SK-N-SH (cell line): ENCODE measurements at regions of chr12 and their contacts with region 1.

Region 1: DNA sequence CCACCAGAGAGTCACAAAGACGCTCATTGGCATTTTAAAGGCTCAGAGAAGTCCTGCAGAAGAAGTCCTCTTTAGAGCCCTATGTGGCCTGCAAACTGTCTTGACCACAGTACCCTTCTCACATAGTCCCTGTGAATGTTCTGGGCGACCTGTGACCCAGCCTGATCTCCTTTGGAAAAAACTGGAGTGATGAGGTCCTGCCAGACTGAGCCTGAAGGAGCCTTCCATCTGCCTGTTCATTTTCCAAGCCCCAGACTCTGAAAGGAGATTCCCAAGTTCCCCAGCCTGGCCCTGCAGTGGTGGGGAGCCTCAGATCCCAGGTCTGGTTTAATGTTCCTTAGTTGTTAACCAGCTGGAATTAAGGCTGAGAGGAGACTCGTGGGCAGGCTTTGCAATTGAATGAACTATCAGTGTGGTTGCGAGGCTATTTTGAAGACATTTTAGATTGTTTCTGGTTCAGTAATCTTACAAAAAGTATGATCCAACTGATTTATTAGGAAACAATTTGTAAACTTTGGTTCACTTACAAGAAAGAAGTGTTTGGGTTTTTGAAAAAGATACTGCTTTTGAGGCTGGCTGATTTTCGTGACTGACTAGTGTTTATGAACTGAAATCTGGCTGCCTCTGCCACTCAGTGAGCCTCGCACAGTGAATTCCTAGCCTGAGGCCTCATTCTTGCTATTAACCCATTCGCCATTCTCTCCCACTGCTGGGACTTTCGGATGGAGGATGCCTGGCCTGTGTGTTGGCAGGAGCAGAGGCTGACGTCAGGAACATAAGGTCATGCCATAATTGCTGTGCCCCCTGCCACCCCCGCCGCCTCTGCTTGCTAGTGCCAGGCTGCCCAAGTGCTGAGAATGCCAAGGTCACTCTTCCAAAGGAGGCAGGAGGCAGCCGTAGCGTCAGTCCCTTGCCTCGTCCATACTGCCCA is 249.0 kb downstream of the CACNA1C start:
- DNase-seq: no peak
- H3K4me3 ChIP-seq: no peak overlapping the region
- H3K27ac ChIP-seq: no peak overlapping the region
- H3K4me1 ChIP-seq: peaks cover 0 to 33% of the 10 kb centered on the region in 2 experiments; a peak in 3 of 4 replicates
- H3K27me3 ChIP-seq: no peaks in the 10 kb centered on the region
- CTCF ChIP-seq: no peak
- EP300 ChIP-seq: no peak
- RAD21 ChIP-seq: no peak

Region 2: GRCh38 chr12:1644534-1645438 is 657.0 kb before region 1 on chr12:
- CTCF ChIA-PET with region 1: no interaction called
- POLR2A ChIA-PET with region 1: no interaction called
- DNase-seq: peak; percentile 88
- H3K4me3 ChIP-seq: no peak overlapping the region
- H3K27ac ChIP-seq: peak overlapping the region; percentile 56 to 89
- H3K4me1 ChIP-seq: peaks cover 15 to 29% of the 10 kb centered on the region in 2 experiments
- H3K27me3 ChIP-seq: no peaks in the 10 kb centered on the region
- CTCF ChIP-seq: no peak
- EP300 ChIP-seq: 0 out of 4 replicates have a peak, but pooled peaks of 1 of the 2 experiments have one; percentile 32
- RAD21 ChIP-seq: no peak; the same call in 1 of the 2 replicates

Region 3: GRCh38 chr12:2229661-2230539 is 71.9 kb before region 1 on chr12:
- CTCF ChIA-PET with region 1: no interaction called
- POLR2A ChIA-PET with region 1: no interaction called
- DNase-seq: no peak
- H3K4me3 ChIP-seq: no peak overlapping the region
- H3K27ac ChIP-seq: no peak overlapping the region
- H3K4me1 ChIP-seq: peaks cover 0 to 3% of the 10 kb centered on the region in 2 experiments; a peak in 1 of 4 replicates
- H3K27me3 ChIP-seq: no peaks in the 10 kb centered on the region
- CTCF ChIP-seq: no peak
- EP300 ChIP-seq: no peak
- RAD21 ChIP-seq: no peak

Region 4: GRCh38 chr12:2291182-2291832 is 10.5 kb before region 1 on chr12:
- CTCF ChIA-PET with region 1: interaction called, 17 read pairs
- POLR2A ChIA-PET with region 1: no interaction called
- DNase-seq: peak; percentile 56
- H3K4me3 ChIP-seq: no peak overlapping the region
- H3K27ac ChIP-seq: no peak overlapping the region
- H3K4me1 ChIP-seq: peaks cover 16 to 60% of the 10 kb centered on the region in 2 experiments; a peak in 3 of 4 replicates
- H3K27me3 ChIP-seq: no peaks in the 10 kb centered on the region
- CTCF ChIP-seq: peak; percentile 71
- EP300 ChIP-seq: no peak
- RAD21 ChIP-seq: peak; percentile 58

Region 5: DNA sequence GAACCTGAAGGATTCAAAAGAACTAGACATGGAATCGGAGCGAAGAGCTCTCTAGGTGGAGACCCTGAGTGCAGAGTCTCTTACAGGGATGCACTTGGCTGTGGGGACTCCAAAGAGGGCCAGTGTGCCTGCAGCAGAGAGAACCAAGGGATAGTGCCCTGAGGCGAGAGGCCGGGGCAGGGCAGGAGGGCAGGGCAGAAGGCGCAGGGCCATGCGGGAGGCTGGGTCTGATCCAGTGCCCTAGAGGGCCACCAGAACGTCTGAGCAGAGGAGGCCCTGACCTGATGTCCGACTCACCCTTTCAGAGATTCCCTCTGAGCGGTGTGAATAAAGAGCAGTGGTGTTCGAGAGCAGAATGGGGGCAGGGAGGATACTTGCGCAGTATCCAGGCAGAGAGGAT is 287.6 kb after region 1 on chr12:
- CTCF ChIA-PET with region 1: no interaction called
- POLR2A ChIA-PET with region 1: no interaction called
- DNase-seq: no peak
- H3K4me3 ChIP-seq: no peak overlapping the region
- H3K27ac ChIP-seq: no peak overlapping the region
- H3K4me1 ChIP-seq: peaks cover 0 to 19% of the 10 kb centered on the region in 2 experiments; a peak in 1 of 4 replicates
- H3K27me3 ChIP-seq: no peaks in the 10 kb centered on the region
- CTCF ChIP-seq: no peak
- EP300 ChIP-seq: no peak
- RAD21 ChIP-seq: no peak